Thyroid gland (tissue), 4 donors: ENCODE measurements at regions of chr3 and their contacts with region 1.

Region 1: GRCh38 chr3:159804726-159805410 is 183.8 kb upstream of the IL12A start:
- DNase-seq: peak; percentile 65 to 68
- H3K4me3 ChIP-seq: no peak overlapping the region
- H3K27ac ChIP-seq: no peak overlapping the region
- H3K4me1 ChIP-seq: no peaks in the 10 kb centered on the region
- H3K27me3 ChIP-seq: no peaks in the 10 kb centered on the region
- CTCF ChIP-seq: peak; percentile 43 to 91 (median 86)
- POLR2A ChIP-seq: no peak

Region 2: GRCh38 chr3:159252772-159253384 is 552.0 kb before region 1 on chr3:
- intact Hi-C with region 1: loop called (anchors 10 kb)
- DNase-seq: no peak
- H3K4me3 ChIP-seq: no peak overlapping the region
- H3K27ac ChIP-seq: no peak overlapping the region
- H3K4me1 ChIP-seq: no peaks in the 10 kb centered on the region
- H3K27me3 ChIP-seq: no peaks in the 10 kb centered on the region
- CTCF ChIP-seq: peak in 2 of 6 experiments; percentile 11 to 13
- POLR2A ChIP-seq: no peak

Region 3: DNA sequence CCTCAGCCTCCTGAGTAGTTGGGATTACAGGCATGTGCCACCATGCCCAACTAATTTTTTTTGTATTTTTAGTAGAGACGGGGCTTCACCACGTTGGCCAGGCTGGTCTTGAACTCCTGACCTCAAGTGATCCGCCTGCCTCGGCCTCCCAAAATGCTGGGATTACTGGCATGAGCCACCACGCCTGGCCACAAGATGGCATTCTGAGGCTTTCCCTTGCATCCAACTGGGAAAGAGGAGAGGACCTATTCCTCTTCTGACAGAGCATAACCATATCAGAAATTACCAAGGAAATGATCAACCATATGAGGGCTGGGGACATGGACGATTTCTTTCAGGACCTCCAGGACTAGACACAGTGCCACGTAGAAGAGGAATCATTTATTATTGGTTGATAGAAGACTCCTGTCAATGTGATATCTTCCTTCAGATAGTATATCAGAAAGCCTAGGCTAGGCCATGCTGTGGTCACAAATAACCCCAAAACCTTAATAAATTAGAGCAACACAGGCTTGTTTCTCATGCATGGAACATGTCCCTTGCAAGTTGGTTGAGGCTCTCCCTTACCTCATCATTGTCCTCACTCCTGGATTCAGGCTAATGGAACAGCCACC is 188.5 kb before region 1 on chr3:
- intact Hi-C with region 1: loop called (anchors 10 kb)
- DNase-seq: peak; percentile 3 to 29
- H3K4me3 ChIP-seq: no peak overlapping the region
- H3K27ac ChIP-seq: no peak overlapping the region
- H3K4me1 ChIP-seq: no peaks in the 10 kb centered on the region
- H3K27me3 ChIP-seq: no peaks in the 10 kb centered on the region
- CTCF ChIP-seq: peak in 4 of 6 experiments; percentile 15 to 43 (median 22)
- POLR2A ChIP-seq: no peak